Posterior cingulate gyrus (tissue), 11 donors: ENCODE measurements at regions of chr7 and their contacts with region 1.

Region 1: GRCh38 chr7:88357781-88358525 is 51.3 kb upstream of the STEAP4 start:
- DNase-seq: no peak

Region 2: GRCh38 chr7:86949052-86949778 is 1408.7 kb before region 1 on chr7:
- intact Hi-C with region 1: no loop called
- DNase-seq: peak in 1 of 10 donors; percentile 55

Region 3: GRCh38 chr7:88243345-88243909 is 114.5 kb before region 1 on chr7:
- intact Hi-C with region 1: loop called (anchors 5 kb)
- DNase-seq: no peak